Activated naive CD4-positive, alpha-beta T cell treated with anti-CD3 and anti-CD28 coated beads for 36 hours (primary cell): ENCODE measurements at regions of chr10 and their contacts with region 1.

Region 1: DNA sequence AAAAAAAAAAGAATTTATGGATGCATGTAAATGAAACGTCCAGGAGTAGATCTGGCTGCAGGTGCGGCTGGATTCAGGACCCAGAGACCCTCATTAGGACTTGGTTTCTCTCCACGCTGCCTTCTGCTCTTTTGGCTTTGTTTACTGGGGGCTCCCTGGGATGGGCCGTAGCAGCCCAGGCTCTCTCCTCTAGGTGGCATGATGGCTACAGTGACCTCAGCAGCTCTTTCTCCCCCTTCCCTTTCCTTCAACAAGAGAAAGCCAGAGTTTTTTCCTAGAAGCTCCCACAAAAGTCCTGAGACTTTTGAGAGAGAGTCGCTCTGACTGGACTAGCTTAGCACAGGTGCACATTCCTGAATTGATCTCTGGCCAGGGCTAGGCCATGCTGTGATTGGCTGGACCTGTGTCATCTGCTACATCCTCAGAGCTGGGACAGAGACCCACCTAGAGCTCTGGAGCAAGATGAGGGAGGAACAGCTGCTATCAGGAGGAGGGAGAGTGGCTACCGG is 67.8 kb upstream of the PDCD4 start:
- DNase-seq: peak; percentile 59
- H3K4me3 Mint-ChIP-seq: no peak overlapping the region
- H3K27ac Mint-ChIP-seq: peak overlapping the region; percentile 47
- H3K4me1 Mint-ChIP-seq: peaks cover 34% of the 10 kb centered on the region
- H3K27me3 Mint-ChIP-seq: no peaks in the 10 kb centered on the region

Region 2: DNA sequence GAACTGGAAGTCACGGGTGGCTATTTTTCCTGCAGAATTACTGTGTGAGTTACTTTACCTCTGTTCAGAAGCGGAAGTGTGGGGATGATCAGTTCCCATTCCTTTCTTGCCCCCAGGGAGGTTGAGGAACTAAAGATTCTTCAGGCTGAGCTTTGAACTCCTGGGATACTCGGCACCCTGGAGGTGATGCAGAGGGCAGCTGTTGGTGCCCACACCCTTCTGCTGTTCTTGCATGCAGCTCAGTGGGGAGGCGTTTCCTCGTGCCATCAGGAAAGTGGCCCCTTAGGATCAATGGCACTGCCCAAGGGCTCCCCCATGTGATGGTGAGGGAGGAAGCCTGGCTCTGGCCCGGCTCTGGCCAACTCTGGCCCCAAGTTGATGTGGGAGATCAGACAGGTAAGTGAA is 641.1 kb before region 1 on chr10:
- CTCF ChIA-PET with region 1: no interaction called
- intact Hi-C with region 1: no loop called
- DNase-seq: no peak
- H3K4me3 Mint-ChIP-seq: no peak overlapping the region
- H3K27ac Mint-ChIP-seq: no peak overlapping the region
- H3K4me1 Mint-ChIP-seq: peaks cover 3% of the 10 kb centered on the region
- H3K27me3 Mint-ChIP-seq: peaks cover 59% of the 10 kb centered on the region

Region 3: DNA sequence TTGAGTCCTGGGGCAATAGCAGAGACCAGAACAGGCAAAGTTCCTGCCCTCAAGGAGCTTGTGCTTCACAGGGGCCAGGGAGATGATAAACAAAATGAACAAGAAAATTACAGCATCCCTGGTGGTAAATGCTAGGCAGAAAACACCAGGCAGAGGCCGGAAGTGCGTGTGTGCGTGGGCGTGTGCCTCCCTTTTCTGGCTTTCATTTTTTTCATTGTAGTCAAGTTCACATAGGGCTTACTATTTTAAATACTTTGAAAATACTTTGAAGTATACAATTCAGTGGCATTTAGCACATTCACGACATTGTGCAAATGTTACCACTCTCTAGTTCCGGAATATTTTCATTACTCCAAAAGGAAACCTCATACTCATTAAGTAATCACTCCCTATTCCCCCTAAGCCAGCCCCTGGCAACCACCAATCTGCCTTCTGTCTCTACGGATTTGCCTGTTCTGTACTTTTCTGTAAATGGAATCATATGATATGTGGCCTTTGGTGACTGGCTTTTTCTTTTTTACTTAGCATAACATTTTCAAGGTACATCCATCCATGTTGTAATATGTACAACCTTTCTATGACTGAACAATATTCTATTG is 20.3 kb before region 1 on chr10:
- CTCF ChIA-PET with region 1: interaction called, 8 read pairs
- intact Hi-C with region 1: loop called (anchors 1 kb)
- DNase-seq: peak; percentile 89
- H3K4me3 Mint-ChIP-seq: no peak overlapping the region
- H3K27ac Mint-ChIP-seq: peak overlapping the region; percentile 39
- H3K4me1 Mint-ChIP-seq: peaks cover 52% of the 10 kb centered on the region
- H3K27me3 Mint-ChIP-seq: no peaks in the 10 kb centered on the region

Region 4: DNA sequence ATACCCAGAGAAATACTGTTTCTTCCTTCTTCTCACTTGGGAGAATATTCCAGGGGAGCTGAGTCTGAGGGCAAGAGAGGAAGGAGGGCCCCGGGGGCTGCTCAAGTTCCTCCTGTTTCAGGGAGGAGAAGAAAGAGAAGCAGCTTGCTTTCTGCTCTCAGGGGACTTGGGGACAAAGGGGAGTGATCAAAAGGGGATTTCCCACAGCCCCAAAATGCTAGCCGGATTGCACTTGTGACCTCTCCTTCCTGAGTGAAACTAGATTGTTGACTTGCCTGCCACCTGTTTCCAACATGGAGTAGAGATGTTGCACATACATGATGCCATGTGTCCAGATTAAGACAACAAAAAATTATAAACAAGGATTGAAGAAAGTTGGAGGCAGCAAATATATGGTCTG is 39.1 kb after region 1 on chr10:
- CTCF ChIA-PET with region 1: interaction called, 5 read pairs
- intact Hi-C with region 1: loop called (anchors 5 kb)
- DNase-seq: peak; percentile 77
- H3K4me3 Mint-ChIP-seq: no peak overlapping the region
- H3K27ac Mint-ChIP-seq: peak overlapping the region; percentile 65
- H3K4me1 Mint-ChIP-seq: peaks cover 43% of the 10 kb centered on the region
- H3K27me3 Mint-ChIP-seq: no peaks in the 10 kb centered on the region

Region 5: GRCh38 chr10:110857265-110858158 is 53.6 kb after region 1 on chr10:
- CTCF ChIA-PET with region 1: interaction called, 27 read pairs
- intact Hi-C with region 1: no loop called
- DNase-seq: peak; percentile 62
- H3K4me3 Mint-ChIP-seq: peak overlapping the region; percentile 46
- H3K27ac Mint-ChIP-seq: peak overlapping the region; percentile 76
- H3K4me1 Mint-ChIP-seq: peaks cover 82% of the 10 kb centered on the region
- H3K27me3 Mint-ChIP-seq: no peaks in the 10 kb centered on the region

Region 6: GRCh38 chr10:110864662-110865140 is 60.8 kb after region 1 on chr10:
- CTCF ChIA-PET with region 1: interaction called, 5 read pairs
- intact Hi-C with region 1: loop called (anchors 2 kb)
- DNase-seq: peak; percentile 69
- H3K4me3 Mint-ChIP-seq: peak overlapping the region; percentile 58
- H3K27ac Mint-ChIP-seq: peak overlapping the region; percentile 84
- H3K4me1 Mint-ChIP-seq: peaks cover 96% of the 10 kb centered on the region
- H3K27me3 Mint-ChIP-seq: no peaks in the 10 kb centered on the region

Region 7: GRCh38 chr10:110883924-110884323 is 80.0 kb after region 1 on chr10:
- CTCF ChIA-PET with region 1: interaction called, 19 read pairs
- intact Hi-C with region 1: no loop called
- DNase-seq: no peak
- H3K4me3 Mint-ChIP-seq: peak overlapping the region; percentile 11
- H3K27ac Mint-ChIP-seq: peak overlapping the region; percentile 39
- H3K4me1 Mint-ChIP-seq: peaks cover 70% of the 10 kb centered on the region
- H3K27me3 Mint-ChIP-seq: no peaks in the 10 kb centered on the region

Region 8: GRCh38 chr10:110893559-110894179 is 89.8 kb after region 1 on chr10:
- CTCF ChIA-PET with region 1: interaction called, 27 read pairs
- intact Hi-C with region 1: loop called (anchors 1 kb)
- DNase-seq: no peak
- H3K4me3 Mint-ChIP-seq: no peak overlapping the region
- H3K27ac Mint-ChIP-seq: no peak overlapping the region
- H3K4me1 Mint-ChIP-seq: peaks cover 42% of the 10 kb centered on the region
- H3K27me3 Mint-ChIP-seq: no peaks in the 10 kb centered on the region

Region 9: DNA sequence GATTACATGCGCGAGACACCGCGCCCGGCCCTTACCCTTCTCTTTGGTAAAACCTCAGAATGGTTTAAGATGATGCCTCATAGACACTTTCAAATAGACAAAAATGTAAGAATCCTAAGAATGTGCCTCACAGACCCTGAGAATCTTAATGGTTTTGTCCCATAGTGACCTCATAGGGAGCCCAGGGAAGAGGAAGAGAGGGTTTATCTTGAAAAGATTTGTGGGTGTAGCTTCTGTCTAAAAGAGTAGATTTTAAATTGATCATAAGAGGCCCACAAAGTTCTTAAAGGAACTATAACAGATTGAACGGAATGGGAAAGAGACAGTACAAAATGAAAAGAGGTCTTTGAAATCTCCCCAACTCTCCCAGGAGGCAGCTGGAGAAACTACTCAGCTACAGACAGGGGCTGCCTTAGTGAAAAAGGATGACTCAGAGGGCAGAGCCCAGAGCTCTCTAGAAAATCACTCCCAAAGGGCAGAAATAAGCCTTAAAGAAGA is 493.5 kb after region 1 on chr10:
- CTCF ChIA-PET with region 1: no interaction called
- intact Hi-C with region 1: no loop called
- DNase-seq: no peak
- H3K4me3 Mint-ChIP-seq: no peak overlapping the region
- H3K27ac Mint-ChIP-seq: no peak overlapping the region
- H3K4me1 Mint-ChIP-seq: no peaks in the 10 kb centered on the region
- H3K27me3 Mint-ChIP-seq: peaks cover 27% of the 10 kb centered on the region